ENCODE measurements at regions of chr12 and their contacts with region 1.

Region 1: DNA sequence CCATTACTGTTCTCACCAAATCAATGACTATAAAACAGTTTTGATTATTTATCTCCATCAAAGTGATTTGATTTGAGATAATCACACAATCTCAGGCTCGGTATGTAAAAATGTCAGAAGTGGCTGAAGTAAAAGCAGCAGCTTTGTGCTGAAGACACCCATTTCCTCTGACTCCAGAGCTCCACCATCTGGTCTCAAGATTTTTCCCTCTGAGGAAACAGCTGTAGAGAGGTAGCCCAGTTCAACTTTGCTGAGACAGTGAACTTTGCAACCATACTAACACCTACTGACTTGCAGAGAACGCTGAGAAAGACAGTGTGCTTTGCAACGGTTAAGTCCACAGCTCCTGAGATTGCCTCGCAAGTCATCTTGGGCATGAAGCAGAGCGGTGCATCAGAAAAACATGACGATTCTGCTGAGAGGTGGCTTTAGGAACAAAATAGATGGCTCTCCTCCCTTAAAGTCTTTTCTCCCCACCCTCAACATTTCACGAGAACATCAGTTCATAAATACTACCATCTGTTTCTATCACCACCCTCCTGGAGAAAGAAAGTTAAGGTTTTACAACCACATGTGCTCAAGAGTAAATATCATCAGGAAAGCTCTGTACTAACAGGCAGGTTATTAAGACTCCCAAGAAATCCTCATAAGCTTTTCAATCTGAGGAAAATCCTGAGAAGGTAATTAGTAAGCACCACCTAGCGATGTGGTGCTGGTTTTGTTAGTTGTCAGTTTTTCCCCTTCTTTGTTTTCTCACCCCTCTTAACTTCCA is 34.8 kb downstream of the HIGD1C start:
- DNase-seq: peak in 4 of 5 donors; percentile 14 to 34 (median 18)
- H3K4me3 ChIP-seq: no peak overlapping the region
- H3K4me3 Mint-ChIP-seq: no peak overlapping the region
- H3K27ac ChIP-seq: no peak overlapping the region
- H3K27ac Mint-ChIP-seq: peak overlapping the region in 6 of 7 donors; percentile 30 to 86 (median 62)
- H3K4me1 ChIP-seq: no peaks in the 10 kb centered on the region
- H3K4me1 Mint-ChIP-seq: peaks cover 0 to 6% (median 4%) of the 10 kb centered on the region in 4 donors
- H3K27me3 ChIP-seq: no peaks in the 10 kb centered on the region
- H3K27me3 Mint-ChIP-seq: no peaks in the 10 kb centered on the region

Region 2: DNA sequence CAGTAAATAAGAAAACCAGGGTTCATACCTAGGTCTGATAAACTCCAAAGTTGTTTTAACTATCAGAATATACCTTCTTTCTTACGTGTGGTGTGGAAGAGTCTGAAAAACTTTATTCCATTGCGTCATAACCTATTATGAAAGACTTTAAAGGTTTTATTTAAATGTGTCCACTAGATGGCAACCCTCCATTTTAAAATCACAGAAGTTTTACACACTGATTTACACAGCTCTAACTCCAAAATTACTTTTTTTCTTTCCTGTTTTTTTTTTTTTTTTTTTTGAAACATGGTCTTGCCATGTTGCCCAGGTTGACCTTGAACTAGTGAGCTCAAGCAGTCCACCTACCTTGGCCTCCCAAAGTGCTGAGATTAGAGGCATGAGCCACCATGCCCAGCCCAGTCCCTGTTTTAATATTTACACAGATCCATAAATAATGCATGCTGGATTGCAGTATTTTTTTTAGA is 161.7 kb before region 1 on chr12:
- CTCF ChIA-PET with region 1: interaction called, 49 read pairs
- POLR2A ChIA-PET with region 1: no interaction called
- intact Hi-C with region 1: loop called (anchors 2 kb)
- DNase-seq: peak in 4 of 5 donors; percentile 47 to 65 (median 61)
- H3K4me3 ChIP-seq: no peak overlapping the region
- H3K4me3 Mint-ChIP-seq: peak overlapping the region in 1 of 8 donors; percentile 57
- H3K27ac ChIP-seq: peak overlapping the region; percentile 45
- H3K27ac Mint-ChIP-seq: peak overlapping the region; percentile 85 to 97 (median 93)
- H3K4me1 ChIP-seq: peaks cover 4% of the 10 kb centered on the region
- H3K4me1 Mint-ChIP-seq: peaks cover 4 to 9% (median 5%) of the 10 kb centered on the region in 4 donors
- H3K27me3 ChIP-seq: no peaks in the 10 kb centered on the region
- H3K27me3 Mint-ChIP-seq: peaks cover 0 to 5% of the 10 kb centered on the region in 2 donors

Region 3: DNA sequence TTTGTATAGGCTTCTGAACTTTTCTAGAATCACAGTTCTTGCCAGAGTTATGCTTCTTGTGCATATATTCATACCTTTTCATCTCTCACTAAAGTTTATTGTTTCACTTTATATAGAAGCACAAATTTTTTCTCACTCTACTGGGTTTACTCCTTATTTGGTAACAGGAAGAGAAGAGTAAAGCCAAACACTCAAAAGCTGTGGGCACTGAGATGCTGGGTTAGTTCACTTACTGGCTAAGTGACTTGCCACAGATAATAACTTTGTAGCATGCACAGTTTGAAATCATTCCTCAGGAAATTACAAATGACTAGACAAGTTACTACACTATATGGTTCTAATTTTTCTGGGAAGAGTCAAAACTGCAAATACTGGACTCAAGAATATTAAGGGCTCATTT is 27.0 kb before region 1 on chr12:
- CTCF ChIA-PET with region 1: no interaction called
- POLR2A ChIA-PET with region 1: no interaction called
- intact Hi-C with region 1: no loop called
- DNase-seq: no peak
- H3K4me3 ChIP-seq: no peak overlapping the region
- H3K4me3 Mint-ChIP-seq: no peak overlapping the region
- H3K27ac ChIP-seq: no peak overlapping the region
- H3K27ac Mint-ChIP-seq: peak overlapping the region in 1 of 7 donors; percentile 12
- H3K4me1 ChIP-seq: no peaks in the 10 kb centered on the region
- H3K4me1 Mint-ChIP-seq: peaks cover 0 to 5% (median under 1%) of the 10 kb centered on the region in 4 donors
- H3K27me3 ChIP-seq: no peaks in the 10 kb centered on the region
- H3K27me3 Mint-ChIP-seq: no peaks in the 10 kb centered on the region

Region 4: DNA sequence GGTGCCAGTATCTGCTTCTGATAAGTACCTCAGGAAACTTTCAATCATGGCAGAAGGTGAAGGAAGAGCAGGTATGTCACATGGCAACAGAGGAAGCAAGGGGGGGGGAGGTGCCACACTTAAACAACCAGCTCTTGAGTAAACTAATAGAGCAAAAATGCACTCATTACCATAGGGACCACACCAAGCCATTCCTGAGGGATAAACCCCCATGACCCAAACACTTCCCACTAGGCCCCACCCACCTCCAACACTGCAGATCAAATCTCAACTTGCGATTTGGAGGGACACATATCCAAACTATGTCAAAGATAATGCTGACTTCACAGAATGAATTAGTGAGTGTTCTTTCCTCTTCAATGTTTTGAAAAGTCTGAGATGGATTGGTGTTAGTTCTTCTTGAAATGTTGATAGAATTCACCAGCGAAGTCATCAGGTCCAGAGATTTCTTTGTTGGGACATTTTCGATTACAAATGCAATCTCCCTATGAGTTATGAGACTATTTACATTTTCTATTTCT is 169.2 kb after region 1 on chr12:
- CTCF ChIA-PET with region 1: no interaction called
- POLR2A ChIA-PET with region 1: no interaction called
- intact Hi-C with region 1: no loop called
- DNase-seq: no peak
- H3K4me3 ChIP-seq: no peak overlapping the region
- H3K4me3 Mint-ChIP-seq: no peak overlapping the region
- H3K27ac ChIP-seq: no peak overlapping the region
- H3K27ac Mint-ChIP-seq: peak overlapping the region in 2 of 7 donors; percentile 37 to 48
- H3K4me1 ChIP-seq: no peaks in the 10 kb centered on the region
- H3K4me1 Mint-ChIP-seq: peaks cover 13 to 27% (median 18%) of the 10 kb centered on the region in 4 donors
- H3K27me3 ChIP-seq: no peaks in the 10 kb centered on the region
- H3K27me3 Mint-ChIP-seq: no peaks in the 10 kb centered on the region

Measured in CD4-positive, alpha-beta memory T cell (primary cell).